Activated naive CD4-positive, alpha-beta T cell treated with anti-CD3 and anti-CD28 coated beads for 36 hours (primary cell): ENCODE measurements at regions of chr1 and their contacts with region 1.

Region 1: GRCh38 chr1:235601104-235601503 is 48.5 kb downstream of the GNG4 start:
- DNase-seq: peak; percentile 45
- H3K4me3 Mint-ChIP-seq: no peak overlapping the region
- H3K27ac Mint-ChIP-seq: no peak overlapping the region
- H3K4me1 Mint-ChIP-seq: no peaks in the 10 kb centered on the region
- H3K27me3 Mint-ChIP-seq: no peaks in the 10 kb centered on the region

Region 2: DNA sequence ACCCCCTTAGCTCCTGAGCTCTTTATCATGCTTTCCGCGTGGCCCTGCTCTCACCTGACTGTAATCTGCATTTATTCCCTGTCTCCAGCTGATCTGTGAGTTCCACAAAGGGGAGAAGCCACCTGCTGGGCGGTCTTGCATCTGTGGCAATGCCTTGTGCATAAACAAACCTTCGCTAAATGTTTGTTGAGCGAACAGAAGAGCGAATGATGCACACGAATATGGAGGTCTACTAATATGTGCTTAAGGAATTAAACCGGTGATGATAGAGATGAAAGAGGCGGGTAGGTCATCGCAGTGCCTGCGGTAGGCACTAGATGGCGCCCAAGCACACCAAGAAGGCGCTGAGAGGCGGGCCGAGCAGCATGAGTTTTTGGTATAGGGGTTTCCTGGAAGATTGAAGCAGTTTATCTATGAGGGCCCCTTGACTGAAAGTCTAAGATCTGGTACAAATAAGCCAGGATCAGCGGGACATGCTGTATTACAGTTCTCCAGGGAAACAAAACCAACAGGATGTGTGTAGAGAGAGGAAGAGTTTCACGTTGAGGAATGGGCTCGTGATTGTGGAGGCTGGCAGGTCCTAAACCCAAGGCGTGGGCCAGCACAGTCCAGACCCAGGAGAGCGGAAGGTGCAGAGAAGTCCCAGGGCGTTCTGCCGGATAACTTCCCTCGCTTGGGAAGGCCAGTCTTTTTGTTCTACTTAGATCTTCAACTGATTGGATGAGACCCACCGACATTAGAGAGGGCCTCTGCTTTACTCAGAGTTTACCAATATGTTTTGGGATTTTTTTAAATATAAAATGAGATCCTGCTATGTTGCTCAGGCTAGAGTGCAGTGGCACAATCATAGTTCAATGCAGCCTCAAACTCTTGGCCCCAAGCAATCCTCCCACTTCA is 507.2 kb before region 1 on chr1:
- CTCF ChIA-PET with region 1: no interaction called
- intact Hi-C with region 1: loop called (anchors 5 kb)
- DNase-seq: peak; percentile 92
- H3K4me3 Mint-ChIP-seq: no peak overlapping the region
- H3K27ac Mint-ChIP-seq: no peak overlapping the region
- H3K4me1 Mint-ChIP-seq: peaks cover 7% of the 10 kb centered on the region
- H3K27me3 Mint-ChIP-seq: peaks cover 2% of the 10 kb centered on the region

Region 3: DNA sequence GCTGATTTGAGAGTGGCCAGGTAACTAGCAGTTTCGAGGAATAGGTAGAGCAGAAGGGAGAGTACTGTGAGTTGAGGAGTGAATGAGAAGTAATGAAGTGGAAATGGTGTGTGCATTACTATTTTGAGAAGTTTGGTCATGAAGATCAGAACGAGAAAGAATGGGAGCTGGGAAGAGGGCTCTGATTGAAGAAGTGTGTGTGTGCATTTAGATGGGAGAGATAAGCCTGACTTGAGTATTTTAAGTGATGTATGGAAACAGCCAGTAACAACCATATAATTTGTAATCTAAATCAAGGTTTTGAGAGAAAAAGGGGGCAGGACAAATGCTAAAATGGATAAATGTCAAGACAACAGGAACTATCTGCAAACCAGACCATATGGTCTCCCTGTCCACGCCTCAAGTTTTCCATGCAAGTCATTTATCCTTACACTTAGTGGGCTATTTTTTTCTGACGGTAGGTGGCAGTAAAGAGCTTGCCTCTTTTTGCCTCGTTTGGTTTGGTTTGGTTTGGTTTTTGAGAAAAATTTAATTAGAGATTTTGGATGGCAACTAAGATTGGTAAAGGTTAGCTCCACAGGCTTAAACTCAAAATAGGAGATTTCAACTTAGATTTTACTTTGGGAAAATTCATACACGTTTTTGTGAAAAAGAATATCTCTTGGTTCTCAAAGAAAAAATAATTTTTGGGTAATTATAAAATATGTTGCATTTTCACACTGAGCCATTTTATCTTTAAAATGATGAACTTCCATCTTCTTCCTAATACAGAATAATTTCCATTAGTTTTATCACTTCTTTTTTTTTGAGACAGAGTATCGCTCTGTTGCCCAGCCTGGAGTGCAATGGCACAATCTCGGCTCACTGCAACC is 87.4 kb before region 1 on chr1:
- CTCF ChIA-PET with region 1: interaction called, 7 read pairs
- intact Hi-C with region 1: loop called (anchors 5 kb)
- DNase-seq: peak; percentile 54
- H3K4me3 Mint-ChIP-seq: no peak overlapping the region
- H3K27ac Mint-ChIP-seq: no peak overlapping the region
- H3K4me1 Mint-ChIP-seq: no peaks in the 10 kb centered on the region
- H3K27me3 Mint-ChIP-seq: no peaks in the 10 kb centered on the region

Region 4: DNA sequence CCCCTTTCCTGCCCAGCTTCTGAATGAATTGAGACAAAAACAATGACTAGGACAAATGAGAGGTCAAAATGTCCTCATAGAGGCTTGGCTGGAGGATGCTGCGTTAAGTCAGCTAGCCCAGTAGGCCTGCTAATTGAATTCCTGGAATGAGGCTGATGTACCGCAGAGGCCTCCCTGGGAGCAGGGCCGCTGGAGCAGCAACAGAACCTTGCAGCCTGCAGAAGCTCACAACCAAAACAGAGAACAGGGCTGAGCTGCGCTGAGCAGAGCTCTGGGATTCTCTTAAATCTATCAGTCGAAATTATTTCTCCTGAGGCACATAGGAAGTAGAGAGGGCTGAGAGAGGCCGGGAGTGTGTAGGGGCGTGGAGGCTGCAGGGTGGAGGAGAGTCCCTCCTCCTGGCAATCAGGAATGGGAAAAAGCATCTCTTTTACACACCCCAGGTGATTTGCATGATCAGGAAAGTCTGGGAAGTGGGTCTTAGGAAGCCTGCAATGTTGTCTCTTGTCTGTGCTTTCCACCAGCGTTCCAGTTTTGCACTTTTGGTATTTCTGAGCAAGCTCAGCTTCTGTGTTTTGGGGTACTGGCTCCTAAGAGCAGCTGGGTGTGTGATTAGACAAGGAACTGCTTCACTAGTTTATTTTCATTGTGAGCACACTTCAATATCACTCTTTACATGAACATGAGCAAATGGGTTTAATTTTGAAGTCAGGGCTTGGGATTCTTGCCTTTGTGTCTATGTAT is 1507.4 kb after region 1 on chr1:
- CTCF ChIA-PET with region 1: no interaction called
- intact Hi-C with region 1: no loop called
- DNase-seq: no peak
- H3K4me3 Mint-ChIP-seq: no peak overlapping the region
- H3K27ac Mint-ChIP-seq: no peak overlapping the region
- H3K4me1 Mint-ChIP-seq: no peaks in the 10 kb centered on the region
- H3K27me3 Mint-ChIP-seq: peaks cover 7% of the 10 kb centered on the region